GM12878 (cell line): ENCODE measurements at regions of chr20 and their contacts with region 1.

Region 1: GRCh38 chr20:21615617-21616080 is 89.8 kb upstream of the PAX1 start:
- DNase-seq: no peak
- ATAC-seq: peak; percentile 94
- H3K4me3 ChIP-seq: no peak overlapping the region
- H3K27ac ChIP-seq: no peak overlapping the region
- H3K4me1 ChIP-seq: no peaks in the 10 kb centered on the region
- H3K27me3 ChIP-seq: no peaks in the 10 kb centered on the region
- CTCF ChIP-seq: peak; percentile 78 to 87 (median 79)
- EP300 ChIP-seq: no peak
- POLR2A ChIP-seq: no peak
- RAD21 ChIP-seq: peak; percentile 73

Region 2: GRCh38 chr20:20860078-20860806 is 755.4 kb before region 1 on chr20:
- CTCF ChIA-PET with region 1: interaction called, 16 read pairs
- POLR2A ChIA-PET with region 1: no interaction called
- RAD21 ChIA-PET with region 1: no interaction called
- SMC1A ChIA-PET with region 1: no interaction called
- in situ Hi-C with region 1: no loop called
- intact Hi-C with region 1: loop called (anchors 5 kb)
- DNase-seq: peak; percentile 15
- ATAC-seq: peak; percentile 98
- H3K4me3 ChIP-seq: no peak overlapping the region
- H3K27ac ChIP-seq: no peak overlapping the region
- H3K4me1 ChIP-seq: no peaks in the 10 kb centered on the region
- H3K27me3 ChIP-seq: no peaks in the 10 kb centered on the region
- CTCF ChIP-seq: peak; percentile 85 to 94 (median 88)
- EP300 ChIP-seq: no peak
- POLR2A ChIP-seq: no peak
- RAD21 ChIP-seq: peak; percentile 84

Region 3: GRCh38 chr20:21505161-21505809 is 110.4 kb before region 1 on chr20:
- CTCF ChIA-PET with region 1: interaction called, 20 read pairs
- POLR2A ChIA-PET with region 1: no interaction called
- RAD21 ChIA-PET with region 1: interaction called, 3 read pairs
- SMC1A ChIA-PET with region 1: interaction called, 4 read pairs
- in situ Hi-C with region 1: no loop called
- intact Hi-C with region 1: no loop called
- DNase-seq: no peak
- ATAC-seq: peak; percentile 70
- H3K4me3 ChIP-seq: no peak overlapping the region
- H3K27ac ChIP-seq: no peak overlapping the region
- H3K4me1 ChIP-seq: peaks cover 12% of the 10 kb centered on the region
- H3K27me3 ChIP-seq: peaks cover 13 to 22% of the 10 kb centered on the region in 2 experiments
- CTCF ChIP-seq: peak; percentile 98 to 99 (median 98); a peak in 5 of 6 replicates
- EP300 ChIP-seq: no peak
- POLR2A ChIP-seq: no peak
- RAD21 ChIP-seq: peak; percentile 98

Region 4: GRCh38 chr20:21529863-21530262 is 85.8 kb before region 1 on chr20:
- CTCF ChIA-PET with region 1: interaction called, 48 read pairs
- POLR2A ChIA-PET with region 1: interaction called, 3 read pairs
- RAD21 ChIA-PET with region 1: interaction called, 24 read pairs
- SMC1A ChIA-PET with region 1: interaction called, 19 read pairs
- in situ Hi-C with region 1: no loop called
- intact Hi-C with region 1: loop called (anchors 1 kb)
- DNase-seq: no peak
- ATAC-seq: peak; percentile 79
- H3K4me3 ChIP-seq: no peak overlapping the region
- H3K27ac ChIP-seq: no peak overlapping the region
- H3K4me1 ChIP-seq: no peaks in the 10 kb centered on the region
- H3K27me3 ChIP-seq: no peaks in the 10 kb centered on the region; a peak in 3 of 4 replicates
- CTCF ChIP-seq: peak; percentile 45 to 54 (median 45); a peak in 4 of 6 replicates
- EP300 ChIP-seq: no peak
- POLR2A ChIP-seq: no peak
- RAD21 ChIP-seq: peak; percentile 20; the same call in 1 of the 2 replicates

Region 5: GRCh38 chr20:21559305-21559704 is 56.3 kb before region 1 on chr20:
- CTCF ChIA-PET with region 1: interaction called, 13 read pairs
- POLR2A ChIA-PET with region 1: no interaction called
- RAD21 ChIA-PET with region 1: no interaction called
- SMC1A ChIA-PET with region 1: no interaction called
- in situ Hi-C with region 1: no loop called
- intact Hi-C with region 1: no loop called
- DNase-seq: peak; percentile 48
- ATAC-seq: peak; percentile 85
- H3K4me3 ChIP-seq: 0 out of 2 replicates have a peak overlapping the region, but pooled peaks have one; percentile 17
- H3K27ac ChIP-seq: no peak overlapping the region
- H3K4me1 ChIP-seq: peaks cover 4% of the 10 kb centered on the region; the same call in 1 of the 2 replicates
- H3K27me3 ChIP-seq: no peaks in the 10 kb centered on the region
- CTCF ChIP-seq: no peak
- EP300 ChIP-seq: no peak
- POLR2A ChIP-seq: no peak
- RAD21 ChIP-seq: no peak

Region 6: GRCh38 chr20:21577551-21577950 is 38.1 kb before region 1 on chr20:
- CTCF ChIA-PET with region 1: interaction called, 38 read pairs
- POLR2A ChIA-PET with region 1: interaction called, 3 read pairs
- RAD21 ChIA-PET with region 1: interaction called, 10 read pairs
- SMC1A ChIA-PET with region 1: interaction called, 4 read pairs
- in situ Hi-C with region 1: no loop called
- intact Hi-C with region 1: no loop called
- DNase-seq: no peak
- ATAC-seq: no peak
- H3K4me3 ChIP-seq: no peak overlapping the region
- H3K27ac ChIP-seq: no peak overlapping the region
- H3K4me1 ChIP-seq: no peaks in the 10 kb centered on the region
- H3K27me3 ChIP-seq: peaks cover 0 to 3% of the 10 kb centered on the region in 2 experiments; a peak in 1 of 4 replicates
- CTCF ChIP-seq: no peak
- EP300 ChIP-seq: no peak
- POLR2A ChIP-seq: no peak
- RAD21 ChIP-seq: no peak

Region 7: DNA sequence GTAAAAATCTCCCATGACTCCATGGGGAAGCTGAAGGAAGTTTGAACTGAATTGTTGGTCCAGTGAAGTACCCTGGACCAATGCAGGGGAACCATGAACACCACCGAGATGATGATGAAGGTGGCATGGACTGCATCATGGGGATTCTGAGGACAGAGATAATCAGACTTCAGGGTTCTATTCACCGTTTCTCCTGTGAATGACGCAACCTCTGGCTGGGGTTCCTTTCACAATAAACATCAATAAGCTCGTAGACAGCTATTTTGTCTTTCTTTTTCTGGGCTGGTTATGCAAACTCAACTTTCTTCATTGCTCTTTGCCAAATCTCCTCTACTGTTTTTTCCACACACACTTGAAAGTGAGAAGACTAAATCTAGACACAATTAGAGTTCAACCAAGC is 13.8 kb before region 1 on chr20:
- CTCF ChIA-PET with region 1: interaction called, 23 read pairs
- POLR2A ChIA-PET with region 1: no interaction called
- RAD21 ChIA-PET with region 1: interaction called, 7 read pairs
- SMC1A ChIA-PET with region 1: interaction called, 4 read pairs
- in situ Hi-C with region 1: no loop called
- intact Hi-C with region 1: no loop called
- DNase-seq: no peak
- ATAC-seq: no peak
- H3K4me3 ChIP-seq: no peak overlapping the region
- H3K27ac ChIP-seq: no peak overlapping the region
- H3K4me1 ChIP-seq: no peaks in the 10 kb centered on the region
- H3K27me3 ChIP-seq: no peaks in the 10 kb centered on the region
- CTCF ChIP-seq: no peak
- EP300 ChIP-seq: no peak
- POLR2A ChIP-seq: no peak
- RAD21 ChIP-seq: no peak